ENCODE measurements at regions of chr10 and their contacts with region 1.

Region 1: DNA sequence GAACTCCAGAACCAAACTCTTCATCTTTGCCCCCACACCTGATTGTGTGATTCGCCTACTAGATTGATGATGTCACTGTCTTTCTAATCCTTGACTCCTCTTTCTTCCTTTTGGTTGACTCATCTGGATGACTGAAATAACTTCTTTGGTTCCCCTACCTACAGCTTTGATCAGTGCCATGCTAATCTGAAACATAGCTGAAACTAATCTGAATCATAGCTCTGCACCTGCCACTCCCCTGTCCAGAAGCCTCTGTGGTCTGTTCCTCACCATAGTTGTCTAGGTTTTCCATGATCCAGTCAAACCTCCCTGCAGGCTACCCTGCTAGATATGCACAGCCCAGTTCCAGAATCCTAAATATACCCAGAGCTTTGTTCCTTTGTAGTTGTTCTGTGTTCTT is 51.9 kb downstream of the ZNF365 start:
- DNase-seq: peak; percentile 64
- H3K4me3 Mint-ChIP-seq: no peak overlapping the region
- H3K27ac Mint-ChIP-seq: peak overlapping the region; percentile 12
- H3K4me1 Mint-ChIP-seq: peaks cover 28% of the 10 kb centered on the region
- H3K27me3 Mint-ChIP-seq: no peaks in the 10 kb centered on the region

Region 2: DNA sequence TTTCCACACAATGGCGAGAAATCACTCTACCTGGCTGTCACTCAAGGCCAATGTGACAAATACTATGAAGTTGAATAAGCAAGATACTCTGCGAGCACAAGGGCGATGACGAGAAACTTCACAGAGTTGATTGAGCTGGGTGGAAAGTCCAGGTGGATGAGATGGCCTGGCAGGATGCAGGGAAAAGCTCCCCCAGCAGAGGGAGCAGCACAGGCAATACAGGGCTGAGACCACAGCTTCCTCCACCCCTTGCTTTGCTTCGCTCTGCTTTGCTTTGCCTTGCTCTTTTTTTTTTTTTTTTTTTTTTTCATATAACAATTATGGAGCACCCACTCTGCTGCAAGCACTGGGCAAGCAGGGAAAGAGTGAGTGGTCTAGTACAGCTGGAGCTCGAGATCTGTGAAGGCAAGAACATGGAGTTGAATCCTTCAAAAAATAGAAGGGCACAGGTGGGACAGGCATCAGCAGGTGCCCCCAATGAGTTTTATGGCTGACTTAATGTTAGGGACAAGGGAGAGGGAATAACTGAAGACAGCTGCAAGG is 675.1 kb before region 1 on chr10:
- CTCF ChIA-PET with region 1: no interaction called
- intact Hi-C with region 1: loop called (anchors 5 kb)
- DNase-seq: peak; percentile 85
- H3K4me3 Mint-ChIP-seq: no peak overlapping the region
- H3K27ac Mint-ChIP-seq: peak overlapping the region; percentile 14
- H3K4me1 Mint-ChIP-seq: peaks cover 38% of the 10 kb centered on the region
- H3K27me3 Mint-ChIP-seq: no peaks in the 10 kb centered on the region

Region 3: DNA sequence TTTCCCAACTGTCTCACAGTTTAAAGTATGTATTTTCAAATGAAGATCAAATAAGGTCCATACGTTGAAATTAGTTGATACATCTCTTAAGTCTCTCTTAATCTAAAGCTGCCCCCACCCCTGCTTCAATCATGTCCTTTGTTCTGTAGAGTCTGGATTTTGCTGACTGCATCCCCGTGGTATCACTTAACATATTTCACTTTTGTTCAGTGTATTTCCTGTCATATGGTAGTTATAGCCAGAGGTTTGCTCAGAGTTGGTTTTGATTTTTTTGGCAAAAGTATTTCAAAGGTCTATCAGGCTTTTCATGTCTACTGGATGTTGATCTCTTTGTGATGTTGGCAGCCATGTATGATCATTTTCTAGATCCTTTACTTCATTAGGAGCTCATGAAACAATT is 579.0 kb before region 1 on chr10:
- CTCF ChIA-PET with region 1: no interaction called
- intact Hi-C with region 1: no loop called
- DNase-seq: no peak
- H3K4me3 Mint-ChIP-seq: no peak overlapping the region
- H3K27ac Mint-ChIP-seq: no peak overlapping the region
- H3K4me1 Mint-ChIP-seq: peaks cover 11% of the 10 kb centered on the region
- H3K27me3 Mint-ChIP-seq: no peaks in the 10 kb centered on the region

Region 4: DNA sequence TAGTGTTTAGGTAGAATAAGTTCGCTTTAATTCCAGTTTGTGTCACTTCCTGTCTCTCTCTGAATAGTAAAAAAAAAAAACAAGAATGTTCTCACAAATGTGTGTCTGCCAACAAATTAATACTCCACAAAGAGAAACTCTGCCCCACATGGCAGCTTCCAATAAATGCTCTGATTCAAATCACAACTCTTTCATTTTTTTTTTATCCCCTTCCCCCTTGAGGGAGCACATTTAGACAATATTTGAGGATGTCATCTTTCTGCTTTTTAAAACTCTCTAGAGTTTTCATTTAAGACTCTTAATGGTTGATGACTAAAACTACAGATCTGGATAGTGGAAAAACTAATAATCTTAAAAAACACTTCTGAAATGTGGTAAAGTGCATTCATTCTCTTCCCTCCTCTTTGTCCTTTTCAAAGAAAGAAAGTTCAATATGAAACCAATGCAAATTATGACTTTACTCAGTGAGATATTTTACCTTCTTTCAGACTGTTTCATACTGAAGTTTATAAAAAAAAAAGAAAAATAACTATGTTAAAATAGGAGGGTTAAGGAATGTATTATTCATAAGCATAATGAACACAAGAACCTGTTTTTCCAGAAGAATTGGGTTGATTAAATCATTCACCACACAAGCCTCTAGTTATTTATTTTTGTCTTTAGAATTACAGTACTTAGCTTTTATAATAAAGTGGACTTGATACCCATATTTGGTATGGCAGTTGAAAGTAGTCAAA is 482.2 kb before region 1 on chr10:
- CTCF ChIA-PET with region 1: no interaction called
- intact Hi-C with region 1: loop called (anchors 1 kb)
- DNase-seq: peak; percentile 47
- H3K4me3 Mint-ChIP-seq: peak overlapping the region; percentile 62
- H3K27ac Mint-ChIP-seq: peak overlapping the region; percentile 98
- H3K4me1 Mint-ChIP-seq: peaks cover 71% of the 10 kb centered on the region
- H3K27me3 Mint-ChIP-seq: no peaks in the 10 kb centered on the region

Region 5: GRCh38 chr10:62268399-62269114 is 157.5 kb before region 1 on chr10 and contains the start of gene RTKN2:
- CTCF ChIA-PET with region 1: interaction called, 6 read pairs
- intact Hi-C with region 1: loop called (anchors 1 kb)
- DNase-seq: peak; percentile 78
- H3K4me3 Mint-ChIP-seq: peak within 1 kb of the TSS; percentile 72
- H3K27ac Mint-ChIP-seq: peak within 1 kb of the TSS; percentile 28
- H3K4me1 Mint-ChIP-seq: peaks cover 23% of the 10 kb centered on the region
- H3K27me3 Mint-ChIP-seq: peaks cover 13% of the 10 kb centered on the region
- total RNA-seq, gene RTKN2: 4.7 to 5.4 TPM

Region 6: DNA sequence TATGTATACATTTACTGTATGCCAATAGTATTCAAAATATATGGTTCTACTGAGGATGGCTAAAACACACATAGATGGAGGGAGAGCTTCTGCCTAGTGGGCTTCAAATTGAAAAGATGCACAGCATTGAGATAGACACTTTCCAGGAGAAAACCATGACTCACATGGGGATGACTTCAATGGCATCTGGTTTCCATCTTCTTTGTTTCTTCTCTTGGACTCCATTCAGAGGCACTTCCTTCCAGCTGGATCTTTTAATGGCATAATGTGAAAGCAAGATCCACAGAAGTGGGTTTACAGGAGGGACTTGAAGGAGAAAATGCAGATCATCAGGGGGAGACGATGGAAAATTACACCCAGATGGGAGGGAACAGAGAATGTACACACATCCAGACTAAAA is 33.0 kb after region 1 on chr10:
- CTCF ChIA-PET with region 1: no interaction called
- intact Hi-C with region 1: no loop called
- DNase-seq: no peak
- H3K4me3 Mint-ChIP-seq: no peak overlapping the region
- H3K27ac Mint-ChIP-seq: no peak overlapping the region
- H3K4me1 Mint-ChIP-seq: no peaks in the 10 kb centered on the region
- H3K27me3 Mint-ChIP-seq: no peaks in the 10 kb centered on the region

Region 7: DNA sequence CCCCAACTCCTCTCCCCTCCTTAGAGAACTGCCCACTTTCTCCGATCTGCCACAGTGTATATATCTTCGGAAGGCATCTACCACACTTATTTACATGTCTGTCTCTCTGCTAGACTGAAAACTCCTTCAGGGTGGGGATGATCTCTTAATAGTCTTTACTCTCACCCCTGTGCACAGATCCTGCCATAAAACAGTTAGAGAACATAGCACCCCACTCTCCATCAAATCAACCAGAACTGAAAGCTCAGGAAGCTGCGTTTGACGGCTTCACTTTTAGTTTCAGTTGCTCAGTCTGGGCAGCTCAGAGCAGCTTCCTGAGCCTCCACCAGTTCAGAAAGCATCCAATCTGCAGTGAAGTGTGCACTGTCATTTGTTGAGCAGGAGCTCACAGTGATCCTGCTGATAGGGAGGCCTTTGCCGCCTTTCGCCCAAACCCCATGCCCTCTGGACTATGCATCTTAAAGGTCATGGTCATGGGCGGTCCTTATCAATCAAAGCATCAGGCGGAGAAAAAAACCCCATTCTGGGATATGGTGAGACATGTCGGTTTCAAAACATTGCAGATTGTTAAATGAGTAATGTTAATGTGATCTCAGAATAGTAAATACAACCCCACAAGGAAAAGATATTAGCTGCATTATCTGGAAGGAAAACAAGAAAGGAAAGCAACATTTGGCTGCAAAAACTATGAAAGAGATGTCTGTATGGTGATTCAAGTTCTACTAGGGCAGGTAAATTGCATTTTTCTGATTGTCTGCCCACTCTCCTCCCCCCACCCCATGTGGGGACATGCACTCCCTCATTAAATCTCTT is 211.4 kb after region 1 on chr10:
- CTCF ChIA-PET with region 1: no interaction called
- intact Hi-C with region 1: loop called (anchors 1 kb)
- DNase-seq: peak; percentile 81
- H3K4me3 Mint-ChIP-seq: no peak overlapping the region
- H3K27ac Mint-ChIP-seq: no peak overlapping the region
- H3K4me1 Mint-ChIP-seq: peaks cover 14% of the 10 kb centered on the region
- H3K27me3 Mint-ChIP-seq: no peaks in the 10 kb centered on the region

Measured in activated naive CD4-positive, alpha-beta T cell treated with anti-CD3 and anti-CD28 coated beads for 36 hours (primary cell).